PC-3 (cell line): ENCODE measurements at regions of chr2 and their contacts with region 1.

Region 1: DNA sequence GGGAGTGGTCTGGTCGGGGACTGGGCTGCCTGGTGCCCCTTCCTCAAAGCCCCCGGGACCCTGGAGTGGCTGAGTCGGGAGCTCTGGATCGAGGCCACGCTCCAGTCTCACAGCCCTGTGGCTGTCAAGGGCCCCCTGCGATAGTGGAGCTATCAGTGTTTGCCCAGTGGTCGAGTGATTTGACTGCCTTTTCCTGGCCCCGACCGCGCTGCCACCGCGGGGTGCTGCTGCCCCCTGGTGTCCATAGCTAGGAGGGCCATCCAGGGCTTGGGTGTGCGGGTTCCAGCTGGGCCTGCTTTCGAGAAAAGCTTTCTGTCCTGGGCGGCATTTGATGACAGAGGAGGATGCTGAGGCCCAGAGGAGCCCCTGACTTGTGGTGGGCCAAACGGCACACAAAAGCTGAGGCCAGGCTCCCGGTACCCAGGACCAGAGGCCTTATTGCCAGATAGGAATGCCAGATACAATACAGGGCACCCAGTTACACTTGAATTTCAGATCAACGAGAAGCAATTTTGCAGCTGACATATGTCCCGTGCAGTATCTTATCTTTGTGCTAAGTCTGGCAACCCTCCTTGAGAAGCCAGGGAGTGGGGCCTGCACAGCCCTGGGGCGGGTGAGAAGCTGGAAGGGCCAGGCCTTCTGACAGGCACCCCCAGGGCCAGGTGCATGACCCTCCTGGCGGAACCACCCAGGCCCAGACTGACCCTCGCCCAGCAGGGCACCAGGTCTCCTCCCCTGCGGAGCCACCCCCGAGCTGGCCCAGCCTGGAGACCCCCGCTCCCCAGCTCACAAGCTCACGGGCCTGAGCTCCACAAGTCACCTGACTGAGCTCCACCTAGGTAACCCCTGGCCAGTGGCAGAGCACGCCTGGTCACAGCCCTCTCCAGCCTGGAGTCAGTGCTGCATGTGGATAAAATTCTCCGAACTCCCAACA is 13.0 kb downstream of the ODC1 start:
- DNase-seq: peak; percentile 81
- ATAC-seq: peak; percentile 60
- H3K4me3 ChIP-seq: no peak overlapping the region
- H3K27ac ChIP-seq: no peak overlapping the region
- H3K4me1 ChIP-seq: no peaks in the 10 kb centered on the region
- H3K27me3 ChIP-seq: no peaks in the 10 kb centered on the region
- CTCF ChIP-seq: peak; percentile 94

Region 2: DNA sequence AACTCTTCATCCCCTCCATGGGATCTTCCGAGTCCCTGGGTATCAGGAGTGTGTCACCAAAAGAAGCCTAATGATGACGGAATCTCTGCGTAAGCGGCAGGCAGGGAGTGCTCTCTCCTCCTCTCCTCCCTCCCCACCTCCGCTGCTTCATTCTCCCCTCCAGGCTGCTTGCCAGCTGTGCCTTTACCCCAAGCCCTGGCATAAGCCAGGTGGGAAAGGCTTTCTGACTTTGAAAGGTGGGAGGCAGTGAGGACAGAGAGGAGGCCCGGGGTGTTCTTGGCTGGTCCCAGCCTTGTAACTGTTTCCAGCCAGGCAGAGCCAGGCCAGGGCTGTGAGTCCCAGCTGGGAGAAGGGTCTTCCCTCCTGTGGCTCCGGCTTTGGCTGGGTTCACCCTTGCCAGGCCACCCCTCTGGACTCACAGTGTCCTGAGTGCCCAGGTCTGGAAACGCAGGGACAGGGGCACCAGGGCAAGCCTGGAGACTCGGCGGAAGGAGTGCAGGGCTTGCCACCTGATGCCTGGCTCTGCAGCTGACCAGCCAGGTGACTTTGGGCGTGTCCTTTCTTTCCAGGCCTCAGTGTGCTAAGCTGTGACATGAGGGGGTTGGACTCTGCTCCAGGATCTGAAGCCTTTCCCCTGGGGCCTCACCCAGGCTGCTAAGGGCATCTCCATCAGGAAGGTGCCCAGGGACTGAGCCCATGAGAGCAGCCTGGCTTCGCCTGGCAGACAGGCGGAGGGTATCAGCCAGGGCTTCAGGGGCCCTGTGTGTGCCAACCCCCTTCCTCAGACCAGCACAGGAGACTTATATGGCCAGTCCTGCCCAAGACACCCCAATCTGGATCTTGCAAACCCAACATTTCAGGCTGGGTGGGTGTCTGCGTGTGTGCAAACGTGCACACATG is 165.2 kb before region 1 on chr2:
- CTCF ChIA-PET with region 1: interaction called, 4 read pairs
- POLR2A ChIA-PET with region 1: interaction called, 14 read pairs
- intact Hi-C with region 1: no loop called
- DNase-seq: no peak
- ATAC-seq: peak; percentile 12; the same call in 1 of the 2 replicates
- H3K4me3 ChIP-seq: no peak overlapping the region
- H3K27ac ChIP-seq: no peak overlapping the region
- H3K4me1 ChIP-seq: peaks cover 31% of the 10 kb centered on the region
- H3K27me3 ChIP-seq: no peaks in the 10 kb centered on the region
- CTCF ChIP-seq: no peak

Region 3: GRCh38 chr2:11104794-11105665 is 669.9 kb after region 1 on chr2:
- CTCF ChIA-PET with region 1: interaction called, 10 read pairs
- POLR2A ChIA-PET with region 1: no interaction called
- intact Hi-C with region 1: no loop called
- DNase-seq: no peak
- ATAC-seq: no peak
- H3K4me3 ChIP-seq: no peak overlapping the region
- H3K27ac ChIP-seq: no peak overlapping the region
- H3K4me1 ChIP-seq: peaks cover 6% of the 10 kb centered on the region
- H3K27me3 ChIP-seq: no peaks in the 10 kb centered on the region
- CTCF ChIP-seq: no peak